GM12878 (cell line): ENCODE measurements at regions of chr2 and their contacts with region 1.

Region 1: DNA sequence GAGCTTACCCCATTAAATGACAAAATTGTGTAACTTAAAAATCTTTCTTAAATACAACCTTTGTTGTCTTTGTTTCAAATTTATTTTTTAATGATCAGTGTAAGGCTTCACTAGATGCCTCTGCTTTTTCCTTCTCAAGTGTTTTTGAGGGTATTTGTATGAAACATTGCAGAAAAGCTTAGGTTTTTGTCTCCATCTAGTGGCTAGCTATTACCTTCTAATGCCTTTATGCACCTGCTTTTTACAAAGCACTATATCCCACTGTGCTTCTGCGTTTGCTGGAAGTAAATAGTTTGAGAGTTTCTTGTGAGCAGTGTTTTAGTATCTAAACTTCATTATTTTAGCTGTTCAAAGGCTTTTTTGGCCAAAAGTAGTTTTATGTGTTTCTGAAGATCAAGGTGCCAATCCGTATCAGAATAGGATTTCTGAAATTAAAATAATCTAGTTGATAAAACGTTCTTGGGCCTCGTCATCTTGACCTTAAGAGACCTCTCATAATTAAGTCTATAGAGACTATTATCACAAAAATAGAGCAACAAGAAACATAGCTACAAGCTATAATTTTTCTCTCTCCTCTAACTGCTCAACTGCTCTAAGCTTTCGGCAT is 47.0 kb downstream of the IWS1 start:
- DNase-seq: peak; percentile 11
- ATAC-seq: peak; percentile 86
- H3K4me3 ChIP-seq: no peak overlapping the region
- H3K27ac ChIP-seq: no peak overlapping the region
- H3K4me1 ChIP-seq: no peaks in the 10 kb centered on the region
- H3K27me3 ChIP-seq: no peaks in the 10 kb centered on the region
- CTCF ChIP-seq: peak; percentile 52 to 69 (median 67)
- EP300 ChIP-seq: no peak
- POLR2A ChIP-seq: no peak
- RAD21 ChIP-seq: peak; percentile 80

Region 2: DNA sequence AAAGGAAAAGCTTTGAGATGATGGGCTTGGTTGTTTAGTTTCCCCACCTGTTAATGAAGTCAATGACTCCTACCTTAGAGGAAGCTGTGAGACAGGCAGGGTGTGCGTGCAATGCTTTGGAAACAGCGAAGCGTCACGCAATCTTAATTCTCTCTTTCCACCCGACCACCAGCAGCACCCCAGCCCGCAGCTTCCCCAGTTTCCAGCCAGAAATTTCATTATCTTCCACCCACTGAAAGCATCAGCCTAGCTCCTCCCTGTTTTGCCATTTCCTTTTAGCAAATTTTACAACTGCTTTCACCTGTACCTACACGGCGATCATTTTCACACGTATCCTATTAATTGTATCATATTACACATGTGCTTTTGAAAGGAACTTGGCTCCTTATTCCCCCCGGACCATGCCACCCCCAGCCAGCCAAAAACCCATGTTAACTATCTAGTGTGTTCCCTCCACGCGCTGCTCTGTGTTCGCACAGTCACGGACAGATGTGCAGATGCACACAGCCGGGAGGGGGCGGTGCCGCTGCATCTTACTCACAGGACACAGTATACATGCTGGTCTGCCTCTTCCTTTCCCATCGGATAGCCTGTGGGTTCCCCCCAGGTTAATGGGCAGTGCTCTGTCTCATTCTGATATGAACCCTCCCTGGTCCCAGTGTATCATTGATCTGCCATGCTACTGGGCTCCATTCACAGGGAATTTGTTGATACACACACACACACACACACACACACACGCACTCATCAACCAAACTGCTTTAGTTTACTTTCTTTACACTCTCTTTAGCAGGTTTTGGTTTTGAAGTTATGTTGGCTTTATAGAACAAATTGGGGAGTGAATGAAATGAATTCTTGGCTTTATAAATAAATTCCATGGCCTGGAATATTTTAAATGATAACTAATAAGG is 281.6 kb before region 1 on chr2:
- CTCF ChIA-PET with region 1: interaction called, 46 read pairs
- POLR2A ChIA-PET with region 1: no interaction called
- RAD21 ChIA-PET with region 1: interaction called, 42 read pairs
- SMC1A ChIA-PET with region 1: interaction called, 20 read pairs
- in situ Hi-C with region 1: loop called (anchors 5 kb)
- intact Hi-C with region 1: loop called (anchors 1 kb)
- DNase-seq: peak; percentile 9
- ATAC-seq: peak; percentile 99
- H3K4me3 ChIP-seq: peak overlapping the region; percentile 2; the same call in 1 of the 2 replicates
- H3K27ac ChIP-seq: no peak overlapping the region
- H3K4me1 ChIP-seq: no peaks in the 10 kb centered on the region
- H3K27me3 ChIP-seq: no peaks in the 10 kb centered on the region; a peak in 1 of 4 replicates
- CTCF ChIP-seq: peak; percentile 58 to 78 (median 70)
- EP300 ChIP-seq: no peak
- POLR2A ChIP-seq: no peak
- RAD21 ChIP-seq: peak; percentile 62

Region 3: DNA sequence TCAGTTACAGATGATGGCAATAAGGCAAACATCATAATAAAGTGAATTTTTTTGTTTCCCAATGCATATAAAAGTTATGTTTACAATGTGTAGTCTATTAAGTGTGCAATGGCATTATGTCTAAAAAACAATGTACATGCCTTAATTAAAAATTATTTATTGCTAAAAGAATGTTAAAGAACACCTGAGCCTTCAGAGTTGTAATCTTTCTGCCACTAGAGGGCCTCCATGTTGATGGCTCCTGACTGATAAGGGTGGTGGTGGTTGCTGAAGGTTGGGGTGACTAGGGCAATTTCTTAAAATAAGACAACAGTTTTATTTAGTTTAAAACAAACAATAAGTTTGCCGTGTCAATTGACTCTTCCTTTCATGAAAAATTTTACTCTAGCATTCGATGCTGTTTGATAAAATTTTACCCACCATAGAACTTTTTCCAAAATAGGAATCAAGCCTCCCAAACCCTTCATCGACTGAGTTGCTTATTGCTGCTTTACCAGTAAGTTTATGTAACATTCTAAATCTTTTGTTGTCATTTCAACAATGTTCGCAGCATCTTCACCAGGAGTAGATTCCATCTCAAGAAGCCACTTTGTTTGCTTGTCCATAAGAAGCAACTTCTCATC is 123.8 kb before region 1 on chr2:
- CTCF ChIA-PET with region 1: interaction called, 13 read pairs
- POLR2A ChIA-PET with region 1: no interaction called
- RAD21 ChIA-PET with region 1: no interaction called
- SMC1A ChIA-PET with region 1: interaction called, 4 read pairs
- in situ Hi-C with region 1: no loop called
- intact Hi-C with region 1: loop called (anchors 1 kb)
- DNase-seq: no peak
- ATAC-seq: peak; percentile 90
- H3K4me3 ChIP-seq: no peak overlapping the region
- H3K27ac ChIP-seq: no peak overlapping the region
- H3K4me1 ChIP-seq: no peaks in the 10 kb centered on the region
- H3K27me3 ChIP-seq: no peaks in the 10 kb centered on the region
- CTCF ChIP-seq: peak; percentile 54 to 68 (median 67)
- EP300 ChIP-seq: no peak
- POLR2A ChIP-seq: no peak
- RAD21 ChIP-seq: peak; percentile 67

Region 4: GRCh38 chr2:127434515-127434914 is 44.8 kb before region 1 on chr2:
- CTCF ChIA-PET with region 1: interaction called, 10 read pairs
- POLR2A ChIA-PET with region 1: no interaction called
- RAD21 ChIA-PET with region 1: interaction called, 3 read pairs
- SMC1A ChIA-PET with region 1: interaction called, 5 read pairs
- in situ Hi-C with region 1: no loop called
- intact Hi-C with region 1: no loop called
- DNase-seq: no peak
- ATAC-seq: no peak
- H3K4me3 ChIP-seq: no peak overlapping the region
- H3K27ac ChIP-seq: no peak overlapping the region
- H3K4me1 ChIP-seq: no peaks in the 10 kb centered on the region
- H3K27me3 ChIP-seq: no peaks in the 10 kb centered on the region
- CTCF ChIP-seq: no peak
- EP300 ChIP-seq: no peak
- POLR2A ChIP-seq: no peak
- RAD21 ChIP-seq: no peak

Region 5: DNA sequence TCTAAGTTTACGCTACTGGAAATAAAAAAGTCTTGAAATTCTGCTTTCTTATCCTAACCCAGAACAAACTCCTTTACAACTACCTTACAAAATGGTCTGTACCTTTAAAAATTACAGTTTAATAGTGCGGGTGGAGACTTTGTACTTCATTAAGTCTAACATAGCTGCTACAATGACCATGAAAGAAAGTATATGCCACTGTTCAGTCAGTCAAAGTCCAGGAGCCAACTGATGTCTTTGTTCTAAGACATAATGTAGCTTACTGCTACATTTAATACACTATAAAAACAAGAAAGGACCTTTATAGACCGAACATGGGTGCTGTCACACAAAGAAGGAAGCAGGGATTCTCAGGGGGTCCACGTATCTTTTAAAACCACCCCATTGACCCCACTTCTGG is 11.0 kb after region 1 on chr2:
- CTCF ChIA-PET with region 1: interaction called, 17 read pairs
- POLR2A ChIA-PET with region 1: interaction called, 3 read pairs
- RAD21 ChIA-PET with region 1: interaction called, 4 read pairs
- SMC1A ChIA-PET with region 1: interaction called, 8 read pairs
- in situ Hi-C with region 1: no loop called
- intact Hi-C with region 1: no loop called
- DNase-seq: no peak
- ATAC-seq: no peak
- H3K4me3 ChIP-seq: no peak overlapping the region
- H3K27ac ChIP-seq: no peak overlapping the region
- H3K4me1 ChIP-seq: no peaks in the 10 kb centered on the region
- H3K27me3 ChIP-seq: no peaks in the 10 kb centered on the region
- CTCF ChIP-seq: no peak
- EP300 ChIP-seq: no peak
- POLR2A ChIP-seq: no peak
- RAD21 ChIP-seq: no peak